ENCODE measurements at regions of chr22 and their contacts with region 1.

Region 1: GRCh38 chr22:46035742-46036557 is 59.0 kb upstream of the WNT7B start:
- DNase-seq: peak; percentile 99 to 100 (median 100)
- ATAC-seq: peak; percentile 88
- H3K4me3 ChIP-seq: peak overlapping the region; percentile 73 to 94
- H3K4me3 Mint-ChIP-seq: peak overlapping the region; percentile 84
- H3K27ac ChIP-seq: peak overlapping the region; percentile 98 to 100
- H3K27ac Mint-ChIP-seq: peak overlapping the region; percentile 97
- H3K4me1 ChIP-seq: peaks cover 18% of the 10 kb centered on the region
- H3K4me1 Mint-ChIP-seq: peaks cover 16% of the 10 kb centered on the region
- H3K27me3 ChIP-seq: no peaks in the 10 kb centered on the region
- H3K27me3 Mint-ChIP-seq: no peaks in the 10 kb centered on the region
- CTCF ChIP-seq: no peak

Region 2: GRCh38 chr22:45309472-45310227 is 726.3 kb before region 1 on chr22 and contains the start of gene FAM118A:
- CTCF ChIA-PET with region 1: no interaction called
- POLR2A ChIA-PET with region 1: no interaction called
- intact Hi-C with region 1: loop called in 1 of 2 experiments (anchors 5 kb)
- DNase-seq: peak; percentile 89 to 100 (median 96)
- ATAC-seq: peak; percentile 84
- H3K4me3 ChIP-seq: peak within 1 kb of the TSS; percentile 88 to 93
- H3K4me3 Mint-ChIP-seq: peak within 1 kb of the TSS; percentile 89
- H3K27ac ChIP-seq: peak within 1 kb of the TSS; percentile 76 to 86
- H3K27ac Mint-ChIP-seq: peak within 1 kb of the TSS; percentile 91
- H3K4me1 ChIP-seq: peaks cover 32% of the 10 kb centered on the region
- H3K4me1 Mint-ChIP-seq: peaks cover 45% of the 10 kb centered on the region
- H3K27me3 ChIP-seq: no peaks in the 10 kb centered on the region
- H3K27me3 Mint-ChIP-seq: no peaks in the 10 kb centered on the region
- CTCF ChIP-seq: no peak
- total RNA-seq, gene FAM118A: 194 to 196 TPM

Region 3: DNA sequence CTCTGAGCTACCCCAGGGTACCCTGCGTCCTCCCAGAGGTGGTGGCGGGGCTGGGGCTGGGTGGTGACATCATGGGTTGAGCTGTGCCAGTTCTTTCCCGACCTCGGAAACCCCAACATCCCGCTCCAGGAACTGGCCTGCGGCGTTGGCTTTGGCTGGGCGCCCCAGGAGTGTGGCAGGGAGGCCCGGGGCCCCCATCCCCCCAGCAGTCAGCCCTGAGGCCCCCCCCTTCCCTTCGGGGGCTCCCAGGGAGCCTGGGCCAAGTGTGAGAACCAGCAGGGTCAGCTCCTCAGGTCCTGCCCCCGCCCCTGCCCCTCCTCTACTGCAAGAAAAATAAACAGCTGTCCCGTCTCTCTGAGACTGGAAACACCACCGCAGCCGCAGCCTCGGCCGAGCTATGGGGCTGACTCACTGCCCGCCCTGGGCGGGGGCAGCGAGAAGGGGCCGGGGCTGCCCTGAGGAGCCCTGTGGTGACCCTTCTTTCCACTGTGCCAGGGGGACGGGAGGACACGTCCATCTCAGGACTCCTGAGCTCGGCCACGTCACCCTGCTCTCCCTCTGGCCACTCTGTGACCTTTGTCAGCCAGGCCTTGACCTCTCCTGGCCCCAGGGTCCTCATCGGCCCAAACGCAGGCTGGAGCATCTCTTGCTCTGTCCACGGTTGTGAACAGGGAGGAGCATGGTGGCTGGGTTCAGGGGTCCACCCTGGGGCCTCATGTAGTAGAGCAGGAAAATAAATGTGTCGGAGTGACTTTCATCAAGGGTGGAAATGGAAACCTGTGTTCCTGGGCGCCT is 132.4 kb before region 1 on chr22:
- CTCF ChIA-PET with region 1: no interaction called
- POLR2A ChIA-PET with region 1: no interaction called
- intact Hi-C with region 1: no loop called
- DNase-seq: no peak
- ATAC-seq: no peak
- H3K4me3 ChIP-seq: no peak overlapping the region
- H3K4me3 Mint-ChIP-seq: no peak overlapping the region
- H3K27ac ChIP-seq: no peak overlapping the region
- H3K27ac Mint-ChIP-seq: no peak overlapping the region
- H3K4me1 ChIP-seq: no peaks in the 10 kb centered on the region
- H3K4me1 Mint-ChIP-seq: no peaks in the 10 kb centered on the region
- H3K27me3 ChIP-seq: no peaks in the 10 kb centered on the region
- H3K27me3 Mint-ChIP-seq: peaks cover 7% of the 10 kb centered on the region
- CTCF ChIP-seq: no peak

Region 4: GRCh38 chr22:46006379-46007002 is 29.5 kb before region 1 on chr22:
- CTCF ChIA-PET with region 1: interaction called, 41 read pairs
- POLR2A ChIA-PET with region 1: interaction called, 9 read pairs
- intact Hi-C with region 1: loop called (anchors 1 kb)
- DNase-seq: peak; percentile 73 to 95 (median 88)
- ATAC-seq: peak; percentile 92
- H3K4me3 ChIP-seq: no peak overlapping the region
- H3K4me3 Mint-ChIP-seq: no peak overlapping the region
- H3K27ac ChIP-seq: no peak overlapping the region
- H3K27ac Mint-ChIP-seq: no peak overlapping the region
- H3K4me1 ChIP-seq: peaks cover 17% of the 10 kb centered on the region
- H3K4me1 Mint-ChIP-seq: peaks cover 10% of the 10 kb centered on the region
- H3K27me3 ChIP-seq: no peaks in the 10 kb centered on the region
- H3K27me3 Mint-ChIP-seq: no peaks in the 10 kb centered on the region
- CTCF ChIP-seq: peak; percentile 94

Region 5: GRCh38 chr22:46071451-46072109 is 35.6 kb after region 1 on chr22:
- CTCF ChIA-PET with region 1: interaction called, 5 read pairs
- POLR2A ChIA-PET with region 1: interaction called, 5 read pairs
- intact Hi-C with region 1: loop called in 1 of 2 experiments (anchors 5 kb)
- DNase-seq: peak in 7 of 9 experiments; percentile 31 to 62 (median 51)
- ATAC-seq: peak; percentile 21
- H3K4me3 ChIP-seq: peak overlapping the region; percentile 32 to 50
- H3K4me3 Mint-ChIP-seq: peak overlapping the region; percentile 82
- H3K27ac ChIP-seq: no peak overlapping the region
- H3K27ac Mint-ChIP-seq: peak overlapping the region; percentile 67
- H3K4me1 ChIP-seq: peaks cover 34% of the 10 kb centered on the region
- H3K4me1 Mint-ChIP-seq: peaks cover 42% of the 10 kb centered on the region
- H3K27me3 ChIP-seq: no peaks in the 10 kb centered on the region
- H3K27me3 Mint-ChIP-seq: no peaks in the 10 kb centered on the region
- CTCF ChIP-seq: no peak

Region 6: GRCh38 chr22:46250035-46250782 is 214.3 kb after region 1 on chr22 and contains the start of gene CDPF1:
- CTCF ChIA-PET with region 1: no interaction called
- POLR2A ChIA-PET with region 1: interaction called, 4 read pairs
- intact Hi-C with region 1: loop called (anchors 1 to 2 kb)
- DNase-seq: peak; percentile 74 to 96 (median 91)
- ATAC-seq: peak; percentile 92
- H3K4me3 ChIP-seq: peak within 1 kb of the TSS; percentile 75 to 80
- H3K4me3 Mint-ChIP-seq: peak within 1 kb of the TSS; percentile 82
- H3K27ac ChIP-seq: peak within 1 kb of the TSS; percentile 66 to 70
- H3K27ac Mint-ChIP-seq: peak within 1 kb of the TSS; percentile 82
- H3K4me1 ChIP-seq: peaks cover 21% of the 10 kb centered on the region
- H3K4me1 Mint-ChIP-seq: peaks cover 22% of the 10 kb centered on the region
- H3K27me3 ChIP-seq: no peaks in the 10 kb centered on the region
- H3K27me3 Mint-ChIP-seq: no peaks in the 10 kb centered on the region
- CTCF ChIP-seq: no peak
- total RNA-seq, gene CDPF1: 0.81 to 1.0 TPM